BJ (cell line): ENCODE measurements at regions of chr6 and their contacts with region 1.

Region 1: DNA sequence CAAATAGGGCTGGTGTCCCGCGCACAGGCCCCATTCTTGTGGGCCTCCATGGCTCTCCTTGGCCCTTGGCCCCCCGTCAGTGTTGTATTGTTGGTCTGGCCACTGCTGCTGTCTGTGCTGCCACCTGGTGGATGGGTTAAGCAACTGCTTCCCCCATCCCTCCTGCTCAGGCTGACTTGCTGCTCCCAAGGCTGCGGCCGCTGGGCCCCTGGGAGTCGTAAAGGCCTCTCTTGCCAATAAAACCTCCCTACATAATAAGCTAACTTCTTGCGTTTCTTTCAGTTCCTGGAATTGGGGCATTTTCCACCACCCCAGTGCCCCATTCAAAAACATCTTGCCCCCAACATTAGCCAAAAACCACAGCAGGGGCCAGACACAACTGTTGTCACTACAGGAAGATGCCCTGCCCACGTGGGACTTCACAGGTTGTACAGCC is 27.1 kb downstream of the CD83 start:
- DNase-seq: no peak
- H3K4me3 ChIP-seq: no peak overlapping the region
- H3K27me3 ChIP-seq: no peaks in the 10 kb centered on the region
- CTCF ChIP-seq: peak; percentile 94

Region 2: DNA sequence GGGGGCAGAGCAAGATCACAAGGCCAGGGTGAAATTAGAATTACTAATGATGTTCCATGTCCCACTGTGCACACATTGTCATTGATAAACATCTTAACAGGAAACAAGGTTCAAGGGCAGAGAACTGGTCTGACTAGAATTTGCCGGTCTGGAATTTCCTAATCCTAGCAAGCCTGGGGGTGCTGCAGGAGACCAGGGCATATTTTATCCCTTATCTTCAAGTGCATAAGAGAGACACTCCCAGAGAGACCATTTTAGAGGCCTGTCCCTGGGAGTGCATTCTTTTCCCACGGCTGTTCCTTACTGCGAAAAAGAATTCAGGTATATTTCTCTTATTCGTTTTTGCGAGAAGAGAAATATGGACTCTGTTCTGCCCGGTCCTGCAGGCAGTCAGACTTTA is 14.4 kb after region 1 on chr6:
- CTCF ChIA-PET with region 1: interaction called, 11 read pairs
- POLR2A ChIA-PET with region 1: no interaction called
- DNase-seq: no peak
- H3K4me3 ChIP-seq: no peak overlapping the region
- H3K27me3 ChIP-seq: 0 out of 2 replicates have a peak, but pooled peaks cover 1% of the 10 kb centered on the region
- CTCF ChIP-seq: no peak